Right ventricle myocardium superior (tissue), 1 donor: ENCODE measurements at regions of chr19 and their contacts with region 1.

Region 1: GRCh38 chr19:39554701-39555311 is 14.8 kb upstream of the EID2 start:
- DNase-seq: no peak
- ATAC-seq: no peak

Region 2: DNA sequence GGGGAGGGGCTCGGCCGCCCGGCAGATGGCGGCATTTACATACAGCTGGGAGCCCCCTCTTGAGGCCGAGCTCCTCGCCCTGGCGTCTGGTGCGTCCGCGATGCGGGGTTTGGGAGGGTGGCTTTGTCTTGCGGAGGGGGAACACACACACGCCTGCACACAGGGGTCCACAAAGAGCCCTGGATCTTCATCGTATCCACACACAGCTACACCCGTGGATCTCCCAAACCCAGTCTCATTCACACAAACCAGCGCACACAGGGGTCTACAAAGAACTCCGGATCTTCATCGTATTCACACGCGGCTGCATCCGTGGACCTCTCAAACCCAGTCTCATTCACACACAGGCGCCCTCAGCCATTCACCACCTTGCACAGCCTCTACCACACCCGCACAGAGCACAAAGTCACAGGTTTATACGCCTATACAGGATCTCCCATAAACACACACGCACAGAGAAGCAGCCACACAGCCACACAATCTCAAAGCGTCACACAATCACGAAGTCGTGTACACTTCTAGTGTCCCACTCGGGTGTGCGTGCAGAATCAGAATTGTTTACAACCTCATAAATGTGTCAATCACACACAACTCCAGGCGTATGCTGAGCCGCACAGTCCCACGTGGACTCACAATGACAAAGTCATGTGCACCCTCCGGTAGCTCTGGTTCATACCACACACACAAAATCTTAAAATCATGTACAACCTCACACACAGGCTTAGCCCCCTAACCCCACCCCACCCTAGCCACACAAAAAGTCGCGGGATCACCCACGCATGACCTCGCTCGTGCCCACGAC is 56.6 kb before region 1 on chr19:
- intact Hi-C with region 1: no loop called
- DNase-seq: no peak
- ATAC-seq: peak; percentile 49

Region 3: GRCh38 chr19:39671738-39672363 is 117.0 kb after region 1 on chr19:
- intact Hi-C with region 1: loop called (anchors 5 kb)
- DNase-seq: no peak
- ATAC-seq: peak; percentile 72